ENCODE measurements at regions of chr17 and their contacts with region 1.

Region 1: DNA sequence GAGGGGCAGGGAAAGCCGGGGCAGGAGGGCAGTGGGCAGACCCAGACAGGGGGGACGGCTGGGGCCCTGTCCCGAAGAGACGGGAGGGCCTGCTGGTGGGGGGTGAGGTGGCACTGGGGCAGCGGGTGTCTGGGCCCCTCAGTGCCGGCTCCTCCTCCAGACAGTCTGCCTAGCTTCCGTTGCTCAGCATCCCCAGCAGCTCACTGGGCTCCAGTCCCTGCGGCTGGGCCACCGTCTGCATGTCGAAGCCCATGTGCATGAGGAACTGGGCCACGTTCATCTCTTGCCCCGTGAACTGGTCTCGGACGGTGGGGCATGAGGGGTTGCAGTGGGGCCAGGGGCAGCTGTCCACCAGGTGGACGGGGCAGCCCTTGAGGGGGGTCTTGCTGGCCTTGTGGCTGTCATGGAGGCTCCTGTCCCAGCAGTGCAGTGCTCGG is 5.8 kb upstream of the MYADML2 start:
- DNase-seq: no peak
- H3K4me3 ChIP-seq: no peak overlapping the region
- H3K27ac ChIP-seq: no peak overlapping the region
- H3K4me1 ChIP-seq: no peaks in the 10 kb centered on the region
- H3K27me3 ChIP-seq: no peaks in the 10 kb centered on the region
- CTCF ChIP-seq: no peak

Region 2: DNA sequence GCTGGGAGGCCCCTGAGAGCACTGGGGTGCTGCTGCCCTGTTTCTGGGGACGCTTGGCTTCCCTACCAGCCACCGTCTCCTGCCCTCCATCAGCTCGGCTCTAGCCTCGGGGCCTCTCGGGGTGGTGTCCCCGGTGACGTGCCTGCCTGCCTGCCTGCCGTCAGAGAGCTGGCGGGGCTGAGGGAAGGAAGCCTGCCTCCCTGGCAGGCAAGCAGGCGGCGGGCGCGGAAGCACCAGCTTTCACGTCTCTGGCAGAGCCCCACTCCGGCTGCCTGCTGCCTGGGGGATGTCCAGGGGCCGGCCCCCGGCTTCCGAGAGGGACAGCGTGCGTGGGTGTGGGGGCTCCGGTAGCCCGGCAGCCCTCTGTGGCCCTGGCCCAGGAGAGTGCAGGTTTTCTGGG is 60.5 kb after region 1 on chr17:
- CTCF ChIA-PET with region 1: no interaction called
- dilution Hi-C with region 1: loop called (anchors 5 kb)
- in situ Hi-C with region 1: no loop called
- intact Hi-C with region 1: no loop called
- DNase-seq: no peak
- H3K4me3 ChIP-seq: no peak overlapping the region
- H3K27ac ChIP-seq: no peak overlapping the region
- H3K4me1 ChIP-seq: no peaks in the 10 kb centered on the region
- H3K27me3 ChIP-seq: no peaks in the 10 kb centered on the region
- CTCF ChIP-seq: no peak